Activated B cell treated with CpG ODN at 0.5 μM for 24 hours (primary cell): ENCODE measurements at regions of chr11 and their contacts with region 1.

Region 1: GRCh38 chr11:32052218-32052617 is 38.7 kb upstream of the RCN1 start:
- DNase-seq: no peak
- ATAC-seq: no peak
- H3K4me3 Mint-ChIP-seq: no peak overlapping the region
- H3K27ac Mint-ChIP-seq: no peak overlapping the region
- H3K4me1 Mint-ChIP-seq: no peaks in the 10 kb centered on the region
- H3K27me3 Mint-ChIP-seq: peaks cover 16% of the 10 kb centered on the region
- CTCF ChIP-seq: peak; percentile 20

Region 2: GRCh38 chr11:31240338-31240904 is 811.8 kb before region 1 on chr11:
- CTCF ChIA-PET with region 1: no interaction called
- POLR2A ChIA-PET with region 1: no interaction called
- intact Hi-C with region 1: loop called (anchors 5 kb)
- DNase-seq: no peak
- ATAC-seq: no peak
- H3K4me3 Mint-ChIP-seq: no peak overlapping the region
- H3K27ac Mint-ChIP-seq: no peak overlapping the region
- H3K4me1 Mint-ChIP-seq: no peaks in the 10 kb centered on the region
- H3K27me3 Mint-ChIP-seq: no peaks in the 10 kb centered on the region
- CTCF ChIP-seq: no peak

Region 3: DNA sequence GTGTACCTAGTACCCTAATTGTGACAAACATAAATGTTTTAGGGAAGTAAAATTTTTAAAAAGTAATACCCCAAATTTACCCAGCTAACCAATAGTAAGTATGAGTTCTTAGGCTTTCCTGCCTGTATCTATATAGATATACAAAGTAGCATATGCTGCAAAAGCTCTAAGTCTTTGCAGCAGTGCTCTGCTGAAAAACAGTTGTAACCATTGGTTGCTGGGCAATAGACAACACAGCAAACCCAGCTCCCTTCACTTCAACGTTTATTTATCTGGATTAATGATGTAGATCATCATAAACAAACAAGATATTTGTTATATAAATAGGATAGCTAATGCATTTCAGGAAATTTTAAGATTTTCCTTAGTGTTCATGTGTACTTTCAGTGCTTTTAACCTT is 323.8 kb before region 1 on chr11:
- CTCF ChIA-PET with region 1: no interaction called
- POLR2A ChIA-PET with region 1: no interaction called
- intact Hi-C with region 1: no loop called
- DNase-seq: no peak
- ATAC-seq: no peak
- H3K4me3 Mint-ChIP-seq: no peak overlapping the region
- H3K27ac Mint-ChIP-seq: no peak overlapping the region
- H3K4me1 Mint-ChIP-seq: no peaks in the 10 kb centered on the region
- H3K27me3 Mint-ChIP-seq: no peaks in the 10 kb centered on the region
- CTCF ChIP-seq: no peak

Region 4: GRCh38 chr11:32090545-32091373 is 38.5 kb after region 1 on chr11 and contains the start of gene RCN1:
- CTCF ChIA-PET with region 1: no interaction called
- POLR2A ChIA-PET with region 1: no interaction called
- intact Hi-C with region 1: loop called (anchors 1 kb)
- DNase-seq: peak; percentile 50
- ATAC-seq: peak; percentile 66
- H3K4me3 Mint-ChIP-seq: peak within 1 kb of the TSS; percentile 86
- H3K27ac Mint-ChIP-seq: peak within 1 kb of the TSS; percentile 81
- H3K4me1 Mint-ChIP-seq: peaks cover 18% of the 10 kb centered on the region
- H3K27me3 Mint-ChIP-seq: peaks cover 9% of the 10 kb centered on the region
- CTCF ChIP-seq: no peak
- total RNA-seq, gene RCN1: 14.5 and 15.8 TPM in 2 replicates

Region 5: DNA sequence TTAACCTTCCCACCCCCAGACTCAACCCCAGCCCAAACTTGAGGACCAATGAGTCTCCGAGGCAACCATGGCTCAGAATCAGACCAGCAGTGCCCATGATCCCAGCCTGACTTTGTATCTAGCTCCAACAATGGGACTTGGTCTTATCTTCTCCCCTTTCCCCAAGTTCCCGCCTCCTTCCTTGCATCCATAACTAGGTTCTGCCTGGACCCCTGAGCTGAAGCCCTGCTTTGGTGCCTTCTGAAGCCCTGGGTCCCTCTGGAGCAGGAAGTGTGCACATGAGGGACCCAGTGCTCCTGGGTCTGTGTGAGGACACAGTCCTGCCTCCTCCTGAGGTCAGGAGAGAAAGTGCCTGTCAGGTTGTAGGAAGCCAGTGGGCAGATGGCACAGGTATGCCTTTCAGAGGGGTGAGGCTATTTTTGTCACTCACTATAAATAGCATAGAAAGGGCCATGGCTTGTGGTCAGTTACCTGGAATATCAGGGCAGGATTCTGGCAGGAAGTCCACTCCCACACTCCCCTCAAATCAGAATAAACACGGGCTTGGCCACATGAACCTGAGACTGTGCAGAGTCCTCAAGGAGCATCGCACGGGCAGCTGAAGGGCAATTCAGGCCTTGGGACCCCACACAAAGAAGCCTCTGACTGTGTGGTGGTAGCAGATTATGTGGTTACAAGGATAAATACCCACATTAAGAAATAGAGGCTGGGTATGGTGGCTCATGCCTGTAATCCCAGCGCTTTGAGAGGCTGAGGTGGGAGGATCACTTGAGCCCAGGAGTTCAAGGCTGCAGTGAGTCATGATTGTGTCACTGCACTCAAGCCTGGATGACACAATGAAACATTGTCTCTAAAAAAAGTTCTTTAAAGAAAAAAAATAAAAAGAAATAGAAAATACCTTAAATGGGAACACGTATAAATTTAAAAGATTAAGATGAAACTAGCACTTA is 66.1 kb after region 1 on chr11:
- CTCF ChIA-PET with region 1: no interaction called
- POLR2A ChIA-PET with region 1: no interaction called
- intact Hi-C with region 1: no loop called
- DNase-seq: no peak
- ATAC-seq: no peak
- H3K4me3 Mint-ChIP-seq: no peak overlapping the region
- H3K27ac Mint-ChIP-seq: no peak overlapping the region
- H3K4me1 Mint-ChIP-seq: no peaks in the 10 kb centered on the region
- H3K27me3 Mint-ChIP-seq: peaks cover 14% of the 10 kb centered on the region
- CTCF ChIP-seq: no peak

Region 6: DNA sequence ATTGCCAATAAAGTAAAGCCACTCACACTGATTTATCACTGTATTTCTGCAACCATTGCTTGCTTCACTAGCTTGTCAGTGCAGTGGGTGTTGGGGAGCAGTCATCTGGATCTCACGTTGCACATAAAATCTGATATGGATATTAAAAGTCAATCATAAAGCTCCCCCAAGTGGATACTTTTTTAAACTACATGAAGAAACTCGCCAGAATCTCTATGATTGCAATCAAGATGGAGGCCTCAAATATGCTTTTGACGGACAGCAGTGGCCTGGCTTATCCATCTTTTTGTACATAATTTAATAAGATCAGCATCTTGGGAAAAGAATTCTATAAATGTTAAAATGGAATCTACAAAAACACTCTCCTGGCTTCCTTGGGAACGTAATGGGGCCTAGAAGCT is 245.4 kb after region 1 on chr11:
- CTCF ChIA-PET with region 1: interaction called, 3 read pairs
- POLR2A ChIA-PET with region 1: no interaction called
- intact Hi-C with region 1: loop called (anchors 5 kb)
- DNase-seq: no peak
- ATAC-seq: no peak
- H3K4me3 Mint-ChIP-seq: no peak overlapping the region
- H3K27ac Mint-ChIP-seq: no peak overlapping the region
- H3K4me1 Mint-ChIP-seq: no peaks in the 10 kb centered on the region
- H3K27me3 Mint-ChIP-seq: no peaks in the 10 kb centered on the region
- CTCF ChIP-seq: no peak